ENCODE measurements at regions of chr22 and their contacts with region 1.

Region 1: GRCh38 chr22:27212617-27213177 is 555.3 kb downstream of the MIAT start:
- DNase-seq: peak; percentile 72 to 93
- H3K4me3 ChIP-seq: no peak overlapping the region
- H3K27ac ChIP-seq: peak overlapping the region; percentile 72 to 84
- H3K4me1 ChIP-seq: peaks cover 11 to 30% of the 10 kb centered on the region in 2 donors
- H3K27me3 ChIP-seq: no peaks in the 10 kb centered on the region
- CTCF ChIP-seq: no peak

Region 2: GRCh38 chr22:27032091-27032761 is 180.5 kb before region 1 on chr22:
- intact Hi-C with region 1: loop called (anchors 5 kb)
- DNase-seq: peak in 1 of 2 donors; percentile 79
- H3K4me3 ChIP-seq: peak overlapping the region in 1 of 2 donors; percentile 35
- H3K27ac ChIP-seq: peak overlapping the region; percentile 67 to 76
- H3K4me1 ChIP-seq: peaks cover 2 to 18% of the 10 kb centered on the region in 2 donors
- H3K27me3 ChIP-seq: no peaks in the 10 kb centered on the region
- CTCF ChIP-seq: peak in 2 of 3 experiments; percentile 38 to 43

Region 3: GRCh38 chr22:27107824-27108223 is 104.9 kb before region 1 on chr22:
- intact Hi-C with region 1: loop called (anchors 2 kb)
- DNase-seq: peak; percentile 21 to 90
- H3K4me3 ChIP-seq: no peak overlapping the region
- H3K27ac ChIP-seq: peak overlapping the region; percentile 68 to 76
- H3K4me1 ChIP-seq: peaks cover 11 to 60% of the 10 kb centered on the region in 2 donors
- H3K27me3 ChIP-seq: no peaks in the 10 kb centered on the region
- CTCF ChIP-seq: no peak

Region 4: DNA sequence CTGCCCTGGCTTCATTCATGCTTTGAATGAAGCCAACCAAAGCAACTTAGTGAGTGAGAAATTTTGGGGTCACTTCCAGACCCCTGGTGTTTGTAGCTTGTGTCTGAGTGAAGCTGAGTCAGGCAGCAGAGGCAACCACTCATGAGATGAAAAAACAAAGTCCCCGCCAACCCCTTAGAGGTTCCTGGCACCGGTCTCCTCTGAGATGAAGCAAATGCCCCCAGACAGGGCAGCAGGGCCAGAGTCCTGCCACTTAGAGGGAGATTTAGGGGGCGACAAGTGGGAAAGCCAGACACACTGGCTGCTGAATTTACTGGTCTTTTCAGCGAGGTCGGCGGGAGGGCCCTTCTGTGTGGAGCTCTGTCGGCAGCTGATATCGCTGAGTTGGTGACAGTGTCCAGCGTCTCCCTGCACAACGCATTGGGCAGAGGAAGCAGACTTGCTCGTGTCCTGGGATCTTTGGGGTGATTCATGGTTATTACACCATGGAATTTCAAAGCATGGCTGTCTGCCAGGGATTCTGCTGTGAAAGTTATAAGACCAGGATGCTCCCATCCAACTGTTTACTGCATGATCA is 72.7 kb before region 1 on chr22:
- intact Hi-C with region 1: no loop called
- DNase-seq: peak in 1 of 2 donors; percentile 75
- H3K4me3 ChIP-seq: no peak overlapping the region
- H3K27ac ChIP-seq: no peak overlapping the region
- H3K4me1 ChIP-seq: peaks cover 0 to 8% of the 10 kb centered on the region in 2 donors
- H3K27me3 ChIP-seq: no peaks in the 10 kb centered on the region
- CTCF ChIP-seq: no peak

Region 5: DNA sequence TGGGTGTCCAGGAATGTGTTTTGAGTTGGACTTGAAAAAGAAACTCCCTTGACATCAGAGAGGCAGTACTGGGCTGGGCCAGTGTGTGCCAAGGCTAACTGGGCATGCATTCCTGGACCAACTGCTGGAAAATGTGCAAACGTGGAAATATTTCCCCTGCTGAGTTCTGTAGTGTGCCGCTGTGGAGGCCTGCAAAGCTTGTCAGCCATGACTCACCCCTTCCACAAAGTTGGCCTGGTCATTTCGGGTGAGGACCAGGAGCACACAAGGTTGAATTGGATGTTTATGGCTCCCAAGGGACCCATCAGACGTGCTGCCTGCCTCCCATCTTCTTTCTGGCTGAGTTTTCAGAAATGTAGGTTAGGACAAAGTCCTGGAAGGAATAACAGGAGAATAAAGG is 42.2 kb before region 1 on chr22:
- intact Hi-C with region 1: loop called (anchors 2 kb)
- DNase-seq: peak; percentile 60 to 94
- H3K4me3 ChIP-seq: no peak overlapping the region
- H3K27ac ChIP-seq: peak overlapping the region; percentile 53 to 55
- H3K4me1 ChIP-seq: peaks cover 0 to 9% of the 10 kb centered on the region in 2 donors
- H3K27me3 ChIP-seq: no peaks in the 10 kb centered on the region
- CTCF ChIP-seq: no peak

Region 6: GRCh38 chr22:27238935-27239510 is 26.3 kb after region 1 on chr22:
- intact Hi-C with region 1: loop called (anchors 2 kb)
- DNase-seq: peak; percentile 54 to 90
- H3K4me3 ChIP-seq: no peak overlapping the region
- H3K27ac ChIP-seq: peak overlapping the region; percentile 13 to 19
- H3K4me1 ChIP-seq: peaks cover 15 to 24% of the 10 kb centered on the region in 2 donors
- H3K27me3 ChIP-seq: no peaks in the 10 kb centered on the region
- CTCF ChIP-seq: no peak